CD4-positive, alpha-beta T cell (primary cell): ENCODE measurements at regions of chr16 and their contacts with region 1.

Region 1: GRCh38 chr16:67470359-67470758 is 10.6 kb downstream of the ATP6V0D1 start:
- DNase-seq: no peak
- ATAC-seq: no peak
- H3K4me3 ChIP-seq: no peak overlapping the region
- H3K4me3 Mint-ChIP-seq: no peak overlapping the region
- H3K27ac ChIP-seq: no peak overlapping the region
- H3K27ac Mint-ChIP-seq: no peak overlapping the region
- H3K4me1 ChIP-seq: peaks cover 28% of the 10 kb centered on the region
- H3K4me1 Mint-ChIP-seq: peaks cover 53% of the 10 kb centered on the region
- H3K27me3 ChIP-seq: no peaks in the 10 kb centered on the region
- H3K27me3 Mint-ChIP-seq: no peaks in the 10 kb centered on the region
- CTCF ChIP-seq: no peak

Region 2: GRCh38 chr16:67350324-67350723 is 120.0 kb before region 1 on chr16:
- CTCF ChIA-PET with region 1: no interaction called
- POLR2A ChIA-PET with region 1: no interaction called
- intact Hi-C with region 1: loop called in 1 of 2 experiments (anchors 5 kb)
- DNase-seq: no peak
- ATAC-seq: no peak
- H3K4me3 ChIP-seq: no peak overlapping the region
- H3K4me3 Mint-ChIP-seq: no peak overlapping the region
- H3K27ac ChIP-seq: no peak overlapping the region
- H3K27ac Mint-ChIP-seq: no peak overlapping the region
- H3K4me1 ChIP-seq: no peaks in the 10 kb centered on the region
- H3K4me1 Mint-ChIP-seq: no peaks in the 10 kb centered on the region
- H3K27me3 ChIP-seq: no peaks in the 10 kb centered on the region
- H3K27me3 Mint-ChIP-seq: peaks cover 5% of the 10 kb centered on the region
- CTCF ChIP-seq: no peak